Left cardiac atrium (tissue), 4 donors: ENCODE measurements at regions of chr19 and their contacts with region 1.

Region 1: GRCh38 chr19:9934132-9934950 is 2.0 kb downstream of the OLFM2 start:
- DNase-seq: peak; percentile 74
- ATAC-seq: peak; percentile 83 to 88

Region 2: GRCh38 chr19:10010247-10010691 is 75.9 kb after region 1 on chr19 and contains the start of gene COL5A3:
- intact Hi-C with region 1: loop called in 1 of 2 experiments (anchors 5 kb)
- DNase-seq: peak; percentile 77
- ATAC-seq: peak; percentile 67 to 69
- total RNA-seq, gene COL5A3: 16.4 to 23.9 TPM

Region 3: GRCh38 chr19:10027158-10027693 is 92.9 kb after region 1 on chr19:
- intact Hi-C with region 1: loop called (anchors 2 to 5 kb)
- DNase-seq: no peak
- ATAC-seq: peak in 1 of 2 donors; percentile 4

Region 4: DNA sequence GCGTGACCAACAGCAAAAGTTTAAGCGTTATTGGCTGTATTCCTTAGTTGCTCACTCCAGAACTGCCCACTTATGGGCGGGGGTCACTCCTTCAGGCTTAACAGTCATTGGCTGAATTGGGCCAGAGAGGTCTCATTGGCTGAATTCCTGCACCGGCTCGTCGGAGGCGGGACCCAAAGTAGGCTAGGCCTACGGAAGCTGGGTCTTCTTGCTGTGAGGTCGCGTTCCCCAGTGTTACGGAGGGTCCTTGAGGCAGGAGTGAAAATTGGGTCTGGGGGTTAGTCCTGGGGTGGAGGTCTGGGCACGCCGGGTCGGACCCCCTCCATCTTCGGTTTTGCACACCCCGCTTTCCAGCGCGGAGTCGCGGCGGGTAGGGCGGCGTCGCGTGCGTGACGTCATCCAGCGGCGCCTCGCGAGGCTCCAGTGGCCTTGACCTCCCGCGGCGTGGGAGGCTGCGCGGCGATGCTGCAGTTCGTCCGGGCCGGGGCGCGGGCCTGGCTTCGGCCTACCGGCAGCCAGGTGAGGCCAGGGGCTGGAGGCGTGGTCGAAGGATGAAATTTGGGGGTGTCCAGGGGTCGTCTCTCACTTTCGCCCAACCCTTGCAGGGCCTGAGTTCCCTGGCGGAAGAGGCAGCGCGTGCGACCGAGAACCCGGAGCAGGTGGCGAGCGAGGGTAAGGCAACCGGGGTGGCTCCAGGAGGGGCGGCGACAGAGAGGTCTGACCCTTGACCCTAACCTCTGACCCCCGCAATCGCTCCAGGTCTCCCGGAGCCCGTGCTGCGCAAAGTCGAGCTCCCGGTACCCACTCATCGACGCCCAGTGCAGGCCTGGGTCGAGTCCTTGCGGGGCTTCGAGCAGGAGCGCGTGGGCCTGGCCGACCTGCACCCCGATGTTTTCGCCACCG is 317.7 kb after region 1 on chr19 and contains the start of gene MRPL4:
- intact Hi-C with region 1: loop called in 1 of 2 experiments (anchors 5 kb)
- DNase-seq: peak; percentile 98
- ATAC-seq: peak; percentile 97
- total RNA-seq, gene MRPL4: 60.2 to 68.5 TPM

Region 5: GRCh38 chr19:10388957-10389356 is 454.6 kb after region 1 on chr19:
- intact Hi-C with region 1: loop called in 1 of 2 experiments (anchors 5 kb)
- DNase-seq: peak; percentile 88
- ATAC-seq: peak; percentile 63 to 81